ENCODE measurements at regions of chr13 and their contacts with region 1.

Region 1: DNA sequence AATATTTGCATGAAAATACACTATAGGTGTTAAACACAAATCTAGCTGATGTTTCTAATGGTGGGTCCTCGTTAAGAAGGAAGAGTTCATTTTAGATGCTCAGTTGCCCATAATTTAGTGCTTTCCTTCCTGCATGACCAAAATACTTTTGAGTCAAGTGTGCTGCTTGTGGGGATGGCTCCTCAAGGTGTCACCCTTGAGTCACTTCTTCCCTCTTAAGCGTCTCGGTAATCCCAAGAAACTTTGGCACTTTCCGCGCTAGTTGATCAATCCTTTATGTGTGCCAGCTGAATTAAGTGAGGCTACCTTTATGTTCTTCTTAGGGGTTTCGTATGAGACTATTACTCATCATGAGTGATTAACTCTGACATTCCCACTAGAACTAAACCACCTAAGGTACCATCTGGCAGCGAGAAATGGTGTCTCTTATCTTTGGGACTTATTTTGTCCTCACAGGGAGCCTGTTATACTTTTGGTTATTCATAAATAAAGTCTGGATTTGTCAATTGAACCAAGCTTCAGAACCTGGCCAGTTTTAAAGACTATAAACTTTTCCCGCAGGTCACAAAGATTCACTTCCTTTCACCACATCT is 106.8 kb downstream of the NHLRC3 start:
- DNase-seq: peak; percentile 60 to 61
- H3K4me3 ChIP-seq: peak overlapping the region in 1 of 2 donors; percentile 7
- H3K27ac ChIP-seq: peak overlapping the region in 1 of 2 donors; percentile 23
- H3K4me1 ChIP-seq: no peaks in the 10 kb centered on the region
- H3K27me3 ChIP-seq: no peaks in the 10 kb centered on the region
- CTCF ChIP-seq: peak; percentile 71 to 74 (median 74)
- POLR2A ChIP-seq: no peak

Region 2: GRCh38 chr13:38685431-38685830 is 459.6 kb before region 1 on chr13:
- intact Hi-C with region 1: no loop called
- DNase-seq: no peak
- H3K4me3 ChIP-seq: no peak overlapping the region
- H3K27ac ChIP-seq: no peak overlapping the region
- H3K4me1 ChIP-seq: peaks cover 0 to 5% of the 10 kb centered on the region in 2 donors
- H3K27me3 ChIP-seq: peaks cover 0 to 15% of the 10 kb centered on the region in 2 donors
- CTCF ChIP-seq: no peak
- POLR2A ChIP-seq: no peak

Region 3: DNA sequence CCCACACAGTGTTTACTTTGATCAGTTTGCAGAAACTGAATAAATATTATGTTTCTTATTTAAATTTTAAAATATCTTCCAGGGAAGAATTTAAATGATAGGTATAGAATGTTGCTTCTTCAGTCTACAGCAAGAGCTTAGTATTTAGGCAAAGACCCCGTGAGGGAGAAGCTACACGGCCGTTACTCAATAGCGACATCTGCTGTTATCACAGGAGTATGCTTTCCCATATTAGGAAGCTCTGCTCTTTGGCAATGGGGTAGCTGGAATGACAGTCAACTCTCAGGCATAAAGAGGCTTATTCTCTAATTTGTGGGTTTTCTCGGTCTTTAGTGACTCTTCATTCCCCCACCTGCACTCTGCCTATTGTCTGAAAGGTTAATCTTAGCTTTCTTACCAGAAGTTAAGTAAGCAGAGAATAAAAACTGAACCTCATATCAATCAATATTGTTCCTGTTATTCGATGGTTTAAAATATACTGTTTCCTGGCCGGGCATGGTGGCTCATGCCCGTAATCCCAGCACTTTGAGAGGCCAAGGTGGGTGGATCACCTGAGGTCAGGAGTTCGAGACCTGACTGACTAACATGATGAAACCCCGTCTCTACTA is 471.2 kb after region 1 on chr13:
- intact Hi-C with region 1: loop called (anchors 10 kb)
- DNase-seq: peak; percentile 20 to 59
- H3K4me3 ChIP-seq: no peak overlapping the region
- H3K27ac ChIP-seq: no peak overlapping the region
- H3K4me1 ChIP-seq: no peaks in the 10 kb centered on the region
- H3K27me3 ChIP-seq: no peaks in the 10 kb centered on the region
- CTCF ChIP-seq: peak; percentile 84 to 91 (median 90)
- POLR2A ChIP-seq: no peak

Measured in uterus (tissue), 4 donors.